Esophagus muscularis mucosa (tissue), 4 donors: ENCODE measurements at regions of chr9 and their contacts with region 1.

Region 1: DNA sequence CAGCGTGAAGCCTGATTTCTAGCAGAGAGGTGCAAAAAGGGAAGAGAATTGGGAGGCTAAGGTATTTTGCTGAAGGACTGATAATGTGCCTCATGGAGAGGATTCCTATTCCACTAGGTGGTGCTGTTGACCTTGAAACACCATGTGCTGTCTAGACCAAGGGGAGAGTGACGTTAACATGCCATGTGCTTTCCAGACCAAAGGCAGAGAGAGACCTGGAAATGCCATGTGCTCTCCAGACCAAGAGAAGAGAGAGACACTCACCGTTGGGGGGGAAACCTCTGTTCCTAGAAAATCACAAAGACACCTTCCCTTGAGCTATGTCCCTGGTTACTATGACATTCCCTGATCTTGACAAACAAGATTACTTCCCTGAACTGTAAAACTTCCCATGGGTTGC is 286.0 kb upstream of the TUSC1 start:
- DNase-seq: no peak
- H3K4me3 ChIP-seq: no peak overlapping the region
- H3K27ac ChIP-seq: no peak overlapping the region
- H3K4me1 ChIP-seq: no peaks in the 10 kb centered on the region
- H3K27me3 ChIP-seq: no peaks in the 10 kb centered on the region
- CTCF ChIP-seq: peak in 2 of 3 experiments; percentile 19 to 39
- EP300 ChIP-seq: no peak
- POLR2A ChIP-seq: no peak

Region 2: GRCh38 chr9:25904701-25905100 is 59.5 kb before region 1 on chr9:
- intact Hi-C with region 1: no loop called
- DNase-seq: no peak
- H3K4me3 ChIP-seq: no peak overlapping the region
- H3K27ac ChIP-seq: no peak overlapping the region
- H3K4me1 ChIP-seq: no peaks in the 10 kb centered on the region
- H3K27me3 ChIP-seq: no peaks in the 10 kb centered on the region
- CTCF ChIP-seq: no peak
- EP300 ChIP-seq: no peak
- POLR2A ChIP-seq: no peak

Region 3: DNA sequence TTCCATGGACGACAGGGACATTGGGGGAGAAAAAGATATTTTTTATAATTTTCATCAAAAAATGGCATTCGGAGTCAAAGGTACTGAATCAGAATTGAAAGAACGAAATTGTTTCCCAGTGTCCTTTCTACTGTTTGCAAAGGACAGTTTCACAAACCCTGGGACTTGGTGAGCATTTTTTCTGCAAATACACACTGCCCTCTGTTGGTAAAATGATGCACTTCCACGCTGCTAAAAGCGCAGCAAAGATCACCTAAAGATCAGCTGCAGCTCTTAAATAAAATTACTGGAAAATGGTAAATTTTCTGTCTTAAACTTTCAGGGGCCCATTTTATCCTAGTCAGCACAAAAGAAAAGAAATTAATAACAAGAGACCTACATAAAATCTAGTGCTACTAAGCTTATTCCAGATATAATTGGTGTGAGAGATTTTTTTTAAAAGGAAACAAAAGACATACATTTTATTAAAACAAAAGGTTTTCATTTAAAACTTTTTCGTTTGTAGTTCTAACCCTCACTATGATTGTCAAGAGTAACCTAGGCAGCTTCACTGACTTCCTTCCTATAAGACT is 362.3 kb after region 1 on chr9:
- intact Hi-C with region 1: loop called (anchors 5 kb)
- DNase-seq: no peak
- H3K4me3 ChIP-seq: no peak overlapping the region
- H3K27ac ChIP-seq: no peak overlapping the region
- H3K4me1 ChIP-seq: peaks cover 0 to 26% (median 20%) of the 10 kb centered on the region in 4 donors
- H3K27me3 ChIP-seq: no peaks in the 10 kb centered on the region
- CTCF ChIP-seq: peak; percentile 71 to 88 (median 80)
- EP300 ChIP-seq: no peak
- POLR2A ChIP-seq: no peak